ENCODE measurements at regions of chr3 and their contacts with region 1.

Region 1: DNA sequence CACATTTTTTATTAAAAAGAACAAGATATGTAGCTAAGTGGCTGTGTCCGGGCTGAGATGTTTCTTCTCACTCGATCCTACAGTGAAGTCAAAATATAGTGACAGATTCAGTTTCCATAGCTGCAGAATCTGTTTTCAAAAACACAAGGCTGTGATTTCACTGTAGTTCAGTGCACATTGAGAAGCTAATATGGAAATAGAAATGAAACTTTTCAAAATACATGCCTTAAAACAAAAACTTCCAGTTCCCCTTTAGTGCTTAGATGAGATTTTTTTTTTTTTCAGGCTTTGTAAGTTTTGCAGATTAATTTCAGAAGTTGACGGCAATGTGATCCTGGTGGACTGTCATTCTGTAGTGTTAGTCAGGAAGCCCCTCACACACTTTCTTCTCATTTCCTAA is 23.8 kb upstream of the TRAK1 start:
- DNase-seq: peak; percentile 59 to 77 (median 67)
- H3K4me3 ChIP-seq: peak overlapping the region in 1 of 3 experiments; percentile 31
- H3K4me3 Mint-ChIP-seq: peak overlapping the region in 1 of 2 donors; percentile 75
- H3K27ac ChIP-seq: peak overlapping the region; percentile 74 to 91
- H3K27ac Mint-ChIP-seq: peak overlapping the region; percentile 93 to 98 (median 96)
- H3K4me1 ChIP-seq: peaks cover 51 to 52% of the 10 kb centered on the region in 2 donors
- H3K4me1 Mint-ChIP-seq: peaks cover 61% of the 10 kb centered on the region
- H3K27me3 ChIP-seq: no peaks in the 10 kb centered on the region
- H3K27me3 Mint-ChIP-seq: peaks cover 0 to 2% (median 0%) of the 10 kb centered on the region in 3 donors
- CTCF ChIP-seq: no peak

Region 2: GRCh38 chr3:42032693-42033349 is 34.5 kb before region 1 on chr3:
- intact Hi-C with region 1: loop called in 1 of 2 experiments (anchors 5 kb)
- DNase-seq: peak in 1 of 3 donors; percentile 16
- H3K4me3 ChIP-seq: no peak overlapping the region
- H3K4me3 Mint-ChIP-seq: no peak overlapping the region
- H3K27ac ChIP-seq: peak overlapping the region in 1 of 2 donors; percentile 43
- H3K27ac Mint-ChIP-seq: peak overlapping the region in 6 of 7 donors; percentile 12 to 81 (median 52)
- H3K4me1 ChIP-seq: peaks cover 7 to 11% of the 10 kb centered on the region in 2 donors
- H3K4me1 Mint-ChIP-seq: peaks cover 41% of the 10 kb centered on the region
- H3K27me3 ChIP-seq: no peaks in the 10 kb centered on the region
- H3K27me3 Mint-ChIP-seq: peaks cover 0 to 3% (median 2%) of the 10 kb centered on the region in 3 donors
- CTCF ChIP-seq: no peak

Measured in CD14-positive monocyte (primary cell).